GM10248 (cell line): ENCODE measurements at regions of chr9 and their contacts with region 1.

Region 1: GRCh38 chr9:15755660-15756059 is 202.8 kb downstream of the CCDC171 start:
- DNase-seq: no peak
- CTCF ChIP-seq: no peak

Region 2: DNA sequence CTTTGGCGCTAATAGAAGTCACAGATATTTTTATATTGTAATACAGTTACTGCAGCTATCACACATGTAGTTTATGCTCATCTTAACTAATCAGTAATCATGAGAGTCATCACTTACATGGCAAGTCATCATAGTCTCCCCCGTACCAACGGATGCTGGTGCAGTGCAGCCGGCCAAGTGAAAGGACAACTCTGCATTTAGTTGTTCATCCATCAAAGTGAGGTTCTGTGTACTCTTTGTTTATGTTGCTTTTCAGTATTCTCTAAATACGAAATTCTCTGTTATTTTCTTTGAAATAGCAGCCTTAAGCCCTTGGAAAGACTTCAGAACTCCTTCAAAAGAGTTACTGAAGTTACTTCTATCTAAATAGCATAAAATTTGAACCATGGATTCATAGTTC is 13.9 kb after region 1 on chr9:
- CTCF ChIA-PET with region 1: interaction called, 18 read pairs
- POLR2A ChIA-PET with region 1: no interaction called
- DNase-seq: no peak
- CTCF ChIP-seq: no peak